PC-3 (cell line): ENCODE measurements at regions of chr10 and their contacts with region 1.

Region 1: GRCh38 chr10:97612386-97612785 is 20.9 kb downstream of the MORN4 start:
- DNase-seq: peak; percentile 72
- ATAC-seq: peak; percentile 98
- H3K4me3 ChIP-seq: no peak overlapping the region
- H3K27ac ChIP-seq: no peak overlapping the region
- H3K4me1 ChIP-seq: no peaks in the 10 kb centered on the region
- H3K27me3 ChIP-seq: no peaks in the 10 kb centered on the region
- CTCF ChIP-seq: peak; percentile 75

Region 2: DNA sequence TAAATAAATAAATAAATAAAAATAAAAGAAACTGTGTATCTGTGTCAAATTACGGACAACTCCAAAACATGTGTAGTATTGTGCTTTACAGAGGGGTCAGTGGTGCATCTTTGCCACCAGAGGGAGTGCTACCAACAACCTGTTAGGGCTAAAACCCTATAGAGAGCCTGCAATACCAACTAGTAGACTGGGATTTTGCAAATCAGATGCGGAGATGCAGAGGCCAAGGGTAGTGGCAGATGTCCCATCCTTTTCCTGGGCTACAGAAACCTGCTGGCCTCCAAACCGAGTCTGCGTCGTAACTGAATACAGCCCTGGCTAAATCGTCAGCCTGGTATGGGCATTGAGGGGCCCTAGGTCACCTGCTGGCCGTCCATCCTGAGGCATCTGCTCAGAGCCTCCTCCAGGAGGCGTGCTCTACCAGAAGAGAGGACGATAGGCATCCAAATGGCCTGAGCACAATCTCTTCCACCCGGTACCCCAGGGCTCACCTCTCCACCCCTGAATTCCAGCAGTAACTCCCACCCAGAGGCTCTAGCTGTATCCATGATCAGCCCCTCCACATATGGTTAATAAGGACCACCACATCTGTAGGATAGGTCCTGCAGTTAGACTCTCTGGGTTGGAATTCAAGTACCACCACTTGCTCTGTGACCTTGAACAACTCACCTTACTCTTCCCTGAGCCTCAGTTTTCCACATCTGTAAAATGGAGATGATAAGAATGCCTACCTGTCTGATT is 205.0 kb before region 1 on chr10:
- CTCF ChIA-PET with region 1: no interaction called
- POLR2A ChIA-PET with region 1: no interaction called
- intact Hi-C with region 1: loop called (anchors 2 kb)
- DNase-seq: peak; percentile 71
- ATAC-seq: peak; percentile 97
- H3K4me3 ChIP-seq: peak overlapping the region; percentile 47; the same call in 1 of the 2 replicates
- H3K27ac ChIP-seq: no peak overlapping the region
- H3K4me1 ChIP-seq: peaks cover 17% of the 10 kb centered on the region
- H3K27me3 ChIP-seq: no peaks in the 10 kb centered on the region
- CTCF ChIP-seq: peak; percentile 76

Region 3: DNA sequence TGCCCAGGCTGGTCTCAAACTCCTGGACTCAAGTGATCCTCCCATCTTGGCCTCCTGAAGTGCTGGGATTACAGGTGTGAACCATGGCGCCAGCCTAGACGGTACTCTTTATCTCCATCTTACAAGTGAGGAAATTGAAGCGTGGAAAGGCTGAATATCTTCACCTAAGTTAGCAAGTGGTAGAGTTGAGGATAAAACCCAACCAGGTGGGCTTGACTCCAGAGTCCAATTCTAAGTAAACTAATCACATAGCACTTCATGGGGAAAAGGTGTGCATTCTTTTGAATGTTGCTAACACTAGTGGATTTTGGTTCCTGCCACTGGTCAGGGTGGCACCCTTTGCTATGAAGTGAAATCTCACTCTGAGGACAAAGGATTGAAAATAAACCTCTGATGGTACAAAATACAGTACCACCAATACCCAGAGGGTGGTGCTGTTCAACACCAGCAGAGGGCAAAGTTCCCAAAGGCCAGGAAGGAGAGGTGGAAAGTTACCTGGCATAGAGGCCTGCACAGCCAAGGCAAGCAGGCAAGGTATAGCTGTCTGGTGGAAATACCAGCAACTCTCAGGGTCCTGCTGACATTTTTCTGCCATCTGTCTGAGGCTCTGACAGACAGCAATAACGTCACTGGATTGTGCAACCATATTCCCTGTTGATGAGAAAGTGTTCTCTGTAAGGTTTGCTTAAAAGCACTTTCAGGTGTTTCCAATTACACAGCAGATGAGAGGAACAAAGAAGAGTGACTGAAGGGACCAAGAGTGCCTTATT is 148.8 kb before region 1 on chr10:
- CTCF ChIA-PET with region 1: no interaction called
- POLR2A ChIA-PET with region 1: no interaction called
- intact Hi-C with region 1: loop called (anchors 1 kb)
- DNase-seq: peak; percentile 72
- ATAC-seq: peak; percentile 59
- H3K4me3 ChIP-seq: no peak overlapping the region
- H3K27ac ChIP-seq: no peak overlapping the region
- H3K4me1 ChIP-seq: peaks cover 11% of the 10 kb centered on the region
- H3K27me3 ChIP-seq: no peaks in the 10 kb centered on the region
- CTCF ChIP-seq: peak; percentile 84

Region 4: GRCh38 chr10:97553575-97554031 is 58.8 kb before region 1 on chr10:
- CTCF ChIA-PET with region 1: no interaction called
- POLR2A ChIA-PET with region 1: no interaction called
- intact Hi-C with region 1: loop called (anchors 10 kb)
- DNase-seq: peak; percentile 71
- ATAC-seq: peak; percentile 99
- H3K4me3 ChIP-seq: no peak overlapping the region
- H3K27ac ChIP-seq: no peak overlapping the region
- H3K4me1 ChIP-seq: peaks cover 7% of the 10 kb centered on the region
- H3K27me3 ChIP-seq: no peaks in the 10 kb centered on the region
- CTCF ChIP-seq: peak; percentile 76

Region 5: DNA sequence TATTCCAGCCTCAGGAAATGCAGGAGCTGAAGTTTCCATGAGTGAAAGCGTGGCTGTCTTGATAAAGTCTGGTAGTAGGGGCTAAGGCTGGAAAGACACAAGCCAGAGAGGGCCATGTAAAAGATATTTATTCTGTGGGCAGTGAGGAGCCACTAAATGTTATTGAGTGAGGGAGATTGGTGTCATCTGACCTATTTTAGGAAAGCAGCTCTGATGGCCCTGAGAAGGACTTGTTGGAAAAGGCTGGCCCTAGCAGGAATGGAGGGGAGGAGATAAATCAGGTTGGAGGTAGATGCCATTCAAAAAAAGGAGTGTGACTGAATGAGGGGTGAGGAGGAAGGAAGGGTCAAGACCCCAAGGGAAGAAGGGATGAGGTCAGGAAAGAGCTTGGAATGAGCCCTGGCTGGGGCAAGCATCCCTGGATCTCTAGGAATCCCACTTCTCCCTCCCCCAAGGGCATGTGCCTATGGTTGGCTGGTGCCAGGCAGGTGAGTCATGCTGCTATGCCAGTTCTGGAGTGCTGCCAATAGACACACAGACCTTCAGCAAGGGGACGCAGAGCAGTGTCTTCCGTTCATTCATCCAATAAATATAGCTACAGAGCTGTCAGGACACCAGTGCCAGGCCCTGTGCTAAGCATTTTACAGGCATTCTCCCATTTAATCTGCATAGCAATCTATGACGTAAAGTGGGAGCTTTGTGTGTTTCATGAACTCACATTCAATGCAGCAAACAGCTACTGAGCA is 37.8 kb before region 1 on chr10:
- CTCF ChIA-PET with region 1: interaction called, 9 read pairs
- POLR2A ChIA-PET with region 1: no interaction called
- intact Hi-C with region 1: loop called (anchors 1 kb)
- DNase-seq: peak; percentile 95
- ATAC-seq: peak; percentile 80
- H3K4me3 ChIP-seq: no peak overlapping the region
- H3K27ac ChIP-seq: peak overlapping the region; percentile 46
- H3K4me1 ChIP-seq: peaks cover 41% of the 10 kb centered on the region
- H3K27me3 ChIP-seq: no peaks in the 10 kb centered on the region
- CTCF ChIP-seq: no peak